ENCODE measurements at regions of chr11 and their contacts with region 1.

Region 1: GRCh38 chr11:123062158-123062891 is 389 bp upstream of the HSPA8 start:
- DNase-seq: peak; percentile 100
- H3K4me3 Mint-ChIP-seq: peak overlapping the region; percentile 99
- H3K27ac Mint-ChIP-seq: peak overlapping the region; percentile 100
- H3K4me1 Mint-ChIP-seq: peaks cover 47% of the 10 kb centered on the region
- H3K27me3 Mint-ChIP-seq: no peaks in the 10 kb centered on the region

Region 2: DNA sequence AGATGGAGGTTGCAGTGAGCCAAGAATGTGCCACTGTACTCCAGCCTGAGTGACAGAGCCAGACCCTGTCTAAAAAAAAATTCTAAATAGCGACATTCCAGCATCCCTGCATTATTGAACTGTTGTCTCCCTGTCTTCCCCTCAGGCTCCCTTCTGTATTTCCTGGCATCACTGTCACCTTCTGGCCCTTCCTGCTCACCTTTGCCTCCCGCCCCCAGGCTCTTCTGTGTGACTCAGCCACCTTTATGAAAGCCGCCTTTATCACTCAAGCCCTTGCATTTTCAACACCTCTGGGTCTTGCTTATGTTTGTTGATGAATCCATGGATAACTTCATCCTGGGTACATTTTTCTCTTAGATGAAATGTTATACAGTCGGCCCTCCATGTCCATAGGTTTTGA is 385.7 kb before region 1 on chr11:
- CTCF ChIA-PET with region 1: no interaction called
- POLR2A ChIA-PET with region 1: no interaction called
- intact Hi-C with region 1: loop called (anchors 5 kb)
- DNase-seq: peak; percentile 61
- H3K4me3 Mint-ChIP-seq: no peak overlapping the region
- H3K27ac Mint-ChIP-seq: no peak overlapping the region
- H3K4me1 Mint-ChIP-seq: peaks cover 48% of the 10 kb centered on the region
- H3K27me3 Mint-ChIP-seq: no peaks in the 10 kb centered on the region

Region 3: GRCh38 chr11:122749005-122749687 is 313.2 kb before region 1 on chr11:
- CTCF ChIA-PET with region 1: no interaction called
- POLR2A ChIA-PET with region 1: no interaction called
- intact Hi-C with region 1: loop called (anchors 1 kb)
- DNase-seq: peak; percentile 83
- H3K4me3 Mint-ChIP-seq: no peak overlapping the region
- H3K27ac Mint-ChIP-seq: no peak overlapping the region
- H3K4me1 Mint-ChIP-seq: peaks cover 33% of the 10 kb centered on the region
- H3K27me3 Mint-ChIP-seq: no peaks in the 10 kb centered on the region

Region 4: GRCh38 chr11:123103326-123103980 is 41.1 kb after region 1 on chr11:
- CTCF ChIA-PET with region 1: interaction called, 6 read pairs
- POLR2A ChIA-PET with region 1: interaction called, 5 read pairs
- intact Hi-C with region 1: loop called (anchors 5 kb)
- DNase-seq: peak; percentile 42
- H3K4me3 Mint-ChIP-seq: no peak overlapping the region
- H3K27ac Mint-ChIP-seq: no peak overlapping the region
- H3K4me1 Mint-ChIP-seq: peaks cover 16% of the 10 kb centered on the region
- H3K27me3 Mint-ChIP-seq: no peaks in the 10 kb centered on the region

Region 5: DNA sequence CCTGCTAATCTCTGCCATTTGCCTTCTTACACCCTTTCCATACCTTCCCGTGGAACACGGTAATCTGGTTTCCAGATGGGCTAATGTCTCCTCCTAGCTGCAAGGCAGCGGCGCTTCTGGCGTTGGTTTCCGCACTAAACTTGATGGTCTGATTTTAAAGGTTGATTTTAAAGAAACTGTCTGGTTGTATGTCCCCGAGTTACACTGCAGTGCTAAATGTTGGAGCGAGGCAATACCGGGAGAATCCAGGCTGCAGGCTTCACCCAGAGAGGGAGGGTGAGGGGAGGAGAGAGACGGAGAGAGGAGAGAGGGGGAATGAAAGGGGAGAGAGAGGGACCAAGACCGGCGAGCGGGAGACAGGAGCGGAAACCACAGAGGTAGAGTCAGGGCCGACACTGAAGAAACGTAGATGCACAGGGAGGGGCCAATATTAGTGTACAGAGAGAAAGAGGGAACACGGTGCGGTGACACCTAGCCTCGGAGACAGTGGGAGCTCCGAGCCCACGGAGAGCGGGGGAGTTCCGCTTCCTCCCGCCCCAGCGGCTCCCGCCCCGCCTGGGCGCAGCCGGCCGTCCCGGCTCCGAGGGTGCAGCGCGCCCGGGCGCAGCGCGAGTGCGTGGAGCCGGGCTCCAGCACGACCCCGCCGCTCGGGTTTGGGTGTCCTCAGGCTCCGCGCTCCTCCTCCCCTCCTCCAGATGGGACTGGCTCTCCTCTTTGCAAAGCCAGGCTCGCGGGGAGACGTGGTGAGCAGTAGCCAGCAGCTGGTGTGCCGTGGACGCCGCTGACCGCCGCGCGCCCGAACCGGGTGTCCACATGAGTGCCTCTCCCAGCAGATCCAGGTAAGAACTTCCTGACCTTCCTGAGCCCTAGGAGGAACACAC is 295.9 kb after region 1 on chr11:
- CTCF ChIA-PET with region 1: no interaction called
- POLR2A ChIA-PET with region 1: interaction called, 4 read pairs
- intact Hi-C with region 1: loop called (anchors 5 kb)
- DNase-seq: peak; percentile 71
- H3K4me3 Mint-ChIP-seq: peak overlapping the region; percentile 82
- H3K27ac Mint-ChIP-seq: peak overlapping the region; percentile 70
- H3K4me1 Mint-ChIP-seq: peaks cover 36% of the 10 kb centered on the region
- H3K27me3 Mint-ChIP-seq: peaks cover 27% of the 10 kb centered on the region

Region 6: DNA sequence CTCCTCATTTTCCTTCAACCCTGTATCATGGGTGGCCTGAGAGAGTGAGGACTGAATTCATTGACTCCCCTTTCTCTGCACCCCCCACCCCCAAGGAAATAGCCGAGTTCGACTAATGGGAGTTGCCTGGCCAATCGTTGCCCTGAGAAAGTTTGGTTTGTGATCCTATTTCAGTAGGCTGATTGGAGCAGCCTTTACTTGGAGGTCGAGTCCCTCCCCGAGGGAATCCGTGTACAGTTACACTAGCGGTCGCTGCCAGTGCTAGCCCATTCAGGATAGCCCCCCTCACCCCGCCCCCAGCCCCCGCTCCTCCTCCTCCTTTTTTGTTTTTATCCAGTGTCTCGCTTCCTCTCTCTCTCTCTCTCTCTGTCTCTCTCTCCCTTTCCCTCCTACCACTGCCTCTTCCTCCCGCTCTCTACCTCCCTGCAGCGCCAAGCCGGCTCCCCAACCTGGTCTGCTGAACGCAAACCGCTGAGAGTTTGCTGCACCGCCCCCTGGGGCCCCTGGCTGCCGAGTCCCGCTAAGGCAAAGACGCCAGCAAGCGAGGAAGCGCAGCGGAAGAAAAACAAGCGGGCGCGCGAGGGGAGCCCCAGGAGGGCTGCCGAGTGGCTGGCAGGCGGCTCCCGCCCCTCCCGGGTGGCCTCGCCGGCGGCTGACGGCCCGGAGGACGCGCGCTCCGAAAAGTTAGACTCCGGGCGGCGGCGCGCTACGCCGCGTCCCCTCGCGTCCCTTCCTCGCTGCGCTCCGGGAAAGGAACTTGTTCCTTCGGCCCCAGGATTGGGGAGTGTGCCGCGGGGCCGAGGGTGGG is 367.8 kb after region 1 on chr11 and contains the start of gene GRAMD1B:
- CTCF ChIA-PET with region 1: no interaction called
- POLR2A ChIA-PET with region 1: no interaction called
- intact Hi-C with region 1: loop called (anchors 5 kb)
- DNase-seq: peak; percentile 85
- H3K4me3 Mint-ChIP-seq: peak within 1 kb of the TSS; percentile 85
- H3K27ac Mint-ChIP-seq: peak within 1 kb of the TSS; percentile 90
- H3K4me1 Mint-ChIP-seq: peaks cover 40% of the 10 kb centered on the region
- H3K27me3 Mint-ChIP-seq: no peaks in the 10 kb centered on the region
- total RNA-seq, gene GRAMD1B: 36.8 to 39.0 TPM

Measured in activated CD4-positive, alpha-beta memory T cell treated with anti-CD3 and anti-CD28 coated beads for 36 hours (primary cell).